ENCODE measurements at regions of chr5 and their contacts with region 1.

Region 1: DNA sequence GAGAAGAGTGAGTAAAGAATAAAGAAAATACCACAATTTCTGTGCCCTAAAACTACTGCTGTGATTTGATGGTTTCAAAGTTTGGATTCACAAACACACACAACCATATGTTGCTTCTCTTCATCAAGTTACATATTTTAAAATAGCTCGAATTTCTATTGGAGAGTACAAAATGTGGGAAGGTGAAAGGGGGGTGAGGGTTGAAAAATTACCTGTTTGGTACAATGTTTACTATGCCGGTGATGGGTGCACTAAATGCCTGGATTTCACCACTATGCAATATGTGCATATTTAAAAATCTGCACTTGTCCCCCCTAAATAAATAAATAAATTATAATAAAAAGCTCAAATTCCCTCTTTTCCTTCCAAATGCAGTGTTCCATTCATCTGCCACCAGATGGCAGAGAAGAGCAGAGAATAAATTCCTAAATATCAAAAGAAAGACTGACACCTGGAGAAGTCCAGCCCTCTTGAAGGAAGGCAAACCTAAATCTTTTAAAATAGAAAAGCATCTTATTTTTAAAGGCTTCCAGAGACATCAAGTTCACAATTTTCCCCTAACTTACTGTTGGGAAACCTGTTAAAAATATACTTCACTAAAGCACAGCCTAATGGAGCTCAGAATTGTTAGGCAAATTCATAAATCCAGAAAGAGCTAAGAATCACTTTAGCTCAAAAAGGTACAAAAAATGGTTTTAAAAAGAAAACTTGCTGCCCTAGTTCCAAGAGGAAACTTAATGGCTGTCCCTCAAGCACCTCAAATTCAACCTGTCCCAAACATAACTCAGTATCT is 24.8 kb upstream of the HNRNPA0 start:
- DNase-seq: no peak
- ATAC-seq: peak in 1 of 2 donors; percentile 46
- H3K4me3 ChIP-seq: no peak overlapping the region
- H3K27ac ChIP-seq: no peak overlapping the region
- H3K4me1 ChIP-seq: peaks cover 0 to 8% of the 10 kb centered on the region in 2 donors
- H3K27me3 ChIP-seq: no peaks in the 10 kb centered on the region
- CTCF ChIP-seq: peak; percentile 74 to 83 (median 79)
- POLR2A ChIP-seq: no peak

Region 2: GRCh38 chr5:137822158-137822764 is 43.3 kb after region 1 on chr5:
- in situ Hi-C with region 1: no loop called
- intact Hi-C with region 1: loop called (anchors 1 kb)
- DNase-seq: peak; percentile 18 to 55
- ATAC-seq: peak; percentile 79 to 90
- H3K4me3 ChIP-seq: no peak overlapping the region
- H3K27ac ChIP-seq: peak overlapping the region; percentile 17 to 54 (median 32)
- H3K4me1 ChIP-seq: peaks cover 8 to 9% of the 10 kb centered on the region in 2 donors
- H3K27me3 ChIP-seq: no peaks in the 10 kb centered on the region
- CTCF ChIP-seq: peak; percentile 32 to 66 (median 53)
- POLR2A ChIP-seq: no peak

Region 3: GRCh38 chr5:137888857-137889759 is 110.1 kb after region 1 on chr5 and contains the start of gene PKD2L2:
- in situ Hi-C with region 1: no loop called
- intact Hi-C with region 1: loop called (anchors 5 kb)
- DNase-seq: peak; percentile 50 to 82
- ATAC-seq: peak; percentile 42 to 66
- H3K4me3 ChIP-seq: peak within 1 kb of the TSS; percentile 43 to 51 (median 46)
- H3K27ac ChIP-seq: peak within 1 kb of the TSS; percentile 88 to 97 (median 92)
- H3K4me1 ChIP-seq: peaks cover 10 to 40% of the 10 kb centered on the region in 2 donors
- H3K27me3 ChIP-seq: no peaks in the 10 kb centered on the region
- CTCF ChIP-seq: no peak
- POLR2A ChIP-seq: peak; percentile 41 to 50
- total RNA-seq, gene PKD2L2: 0.70 to 4.8 (median 0.94) TPM in 3 of 4 donors, not detected in the other

Region 4: GRCh38 chr5:138128334-138128733 is 349.4 kb after region 1 on chr5:
- in situ Hi-C with region 1: loop called in 3 of 4 experiments (anchors 10 to 25 kb)
- intact Hi-C with region 1: loop called (anchors 10 kb)
- DNase-seq: no peak
- ATAC-seq: no peak
- H3K4me3 ChIP-seq: no peak overlapping the region
- H3K27ac ChIP-seq: no peak overlapping the region
- H3K4me1 ChIP-seq: no peaks in the 10 kb centered on the region
- H3K27me3 ChIP-seq: no peaks in the 10 kb centered on the region
- CTCF ChIP-seq: no peak
- POLR2A ChIP-seq: no peak

Region 5: DNA sequence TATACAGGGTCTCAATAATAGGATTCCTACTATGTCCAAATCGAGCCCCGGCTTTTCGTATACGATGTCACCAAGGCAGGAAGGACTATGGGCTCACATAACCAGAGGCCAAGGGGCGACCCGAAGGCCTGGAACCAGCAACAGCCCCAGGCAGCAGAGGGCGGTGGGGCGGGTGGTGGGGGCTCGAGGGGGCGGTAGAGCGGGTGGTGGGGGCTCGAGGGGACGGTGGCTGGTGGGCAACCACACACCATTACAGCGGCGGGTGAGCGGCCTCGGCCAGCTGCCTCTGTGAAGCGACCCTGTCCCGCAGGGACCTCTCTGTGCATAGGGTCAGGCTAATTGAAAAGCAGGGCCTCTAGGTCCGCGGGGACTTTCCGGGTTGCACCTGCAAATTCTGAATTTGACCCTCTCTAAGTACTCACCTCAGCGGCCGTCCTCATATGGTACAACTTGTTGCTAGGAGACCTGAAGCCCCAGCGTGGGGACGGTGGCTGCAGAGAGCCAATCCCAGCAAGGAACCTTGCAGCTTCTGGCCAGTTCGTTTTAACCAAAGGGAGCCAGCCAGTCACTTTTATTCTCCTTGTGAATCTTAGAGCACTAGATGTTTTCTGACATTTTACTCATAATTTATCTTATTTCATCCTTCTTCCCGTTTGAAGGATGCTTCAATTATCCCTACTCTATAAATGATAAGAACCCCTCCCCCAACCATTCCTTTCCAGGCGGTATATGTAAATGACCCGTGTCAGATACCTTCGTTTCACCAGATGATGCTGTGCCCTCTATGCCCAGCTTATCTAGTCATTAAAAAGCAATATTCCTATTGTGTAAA is 360.2 kb after region 1 on chr5 and contains the start of gene NME5:
- in situ Hi-C with region 1: loop called in 2 of 4 experiments (anchors 25 kb)
- intact Hi-C with region 1: loop called (anchors 10 kb)
- DNase-seq: peak; percentile 20 to 31
- ATAC-seq: peak; percentile 66 to 74
- H3K4me3 ChIP-seq: peak within 1 kb of the TSS; percentile 50 to 57 (median 56)
- H3K27ac ChIP-seq: no peak within 1 kb of the TSS
- H3K4me1 ChIP-seq: peaks cover 0 to 7% of the 10 kb centered on the region in 2 donors
- H3K27me3 ChIP-seq: no peaks in the 10 kb centered on the region
- CTCF ChIP-seq: no peak
- POLR2A ChIP-seq: no peak
- total RNA-seq, gene NME5: 0.51 TPM in 2 of 4 donors, not detected in the others